Sciatic nerve (tissue), 2 donors: ENCODE measurements at regions of chr7 and their contacts with region 1.

Region 1: DNA sequence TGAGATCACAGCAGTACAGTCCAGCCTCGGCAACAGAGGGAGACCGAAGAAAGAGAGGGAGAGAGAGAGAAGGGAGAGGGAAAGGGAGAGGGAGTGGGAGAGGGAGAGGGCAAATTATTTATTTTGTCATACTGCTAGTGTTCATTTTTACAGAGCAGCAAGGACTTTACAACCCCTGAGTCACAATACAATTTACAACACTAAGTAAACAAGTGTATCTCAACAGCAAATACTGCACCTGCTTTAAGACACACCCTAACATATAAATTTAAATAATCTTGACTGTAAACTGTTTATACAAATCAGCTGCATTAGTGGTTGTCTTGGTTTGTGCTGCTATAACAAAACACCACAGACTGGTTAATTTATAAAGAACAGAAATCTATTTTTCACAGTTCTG is 27.2 kb downstream of the HTR5A start:
- DNase-seq: no peak
- ATAC-seq: no peak

Region 2: DNA sequence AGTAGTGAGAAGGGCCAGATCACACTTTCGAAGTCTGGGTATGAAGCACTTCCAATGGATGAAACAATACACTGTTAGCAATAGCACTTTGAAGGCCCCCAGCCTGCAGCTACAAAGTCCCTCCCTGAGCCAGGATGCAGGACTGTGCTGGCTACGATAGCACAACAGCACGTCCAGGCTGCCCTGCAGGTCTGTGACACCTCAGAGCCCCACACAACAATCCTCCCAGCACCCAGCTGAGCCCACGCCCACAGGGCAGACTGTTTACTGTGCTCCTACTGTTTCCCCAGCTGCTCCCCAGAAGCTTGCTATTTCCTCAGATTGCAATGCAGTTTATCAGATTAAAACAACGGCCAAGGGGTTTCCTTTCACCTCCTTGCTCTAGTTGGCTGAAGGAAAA is 44.2 kb after region 1 on chr7:
- intact Hi-C with region 1: no loop called
- DNase-seq: no peak
- ATAC-seq: no peak

Region 3: GRCh38 chr7:156279635-156280034 is 1182.3 kb after region 1 on chr7:
- intact Hi-C with region 1: loop called (anchors 5 kb)
- DNase-seq: no peak
- ATAC-seq: no peak